Gastrocnemius medialis (tissue), 4 donors: ENCODE measurements at regions of chr16 and their contacts with region 1.

Region 1: DNA sequence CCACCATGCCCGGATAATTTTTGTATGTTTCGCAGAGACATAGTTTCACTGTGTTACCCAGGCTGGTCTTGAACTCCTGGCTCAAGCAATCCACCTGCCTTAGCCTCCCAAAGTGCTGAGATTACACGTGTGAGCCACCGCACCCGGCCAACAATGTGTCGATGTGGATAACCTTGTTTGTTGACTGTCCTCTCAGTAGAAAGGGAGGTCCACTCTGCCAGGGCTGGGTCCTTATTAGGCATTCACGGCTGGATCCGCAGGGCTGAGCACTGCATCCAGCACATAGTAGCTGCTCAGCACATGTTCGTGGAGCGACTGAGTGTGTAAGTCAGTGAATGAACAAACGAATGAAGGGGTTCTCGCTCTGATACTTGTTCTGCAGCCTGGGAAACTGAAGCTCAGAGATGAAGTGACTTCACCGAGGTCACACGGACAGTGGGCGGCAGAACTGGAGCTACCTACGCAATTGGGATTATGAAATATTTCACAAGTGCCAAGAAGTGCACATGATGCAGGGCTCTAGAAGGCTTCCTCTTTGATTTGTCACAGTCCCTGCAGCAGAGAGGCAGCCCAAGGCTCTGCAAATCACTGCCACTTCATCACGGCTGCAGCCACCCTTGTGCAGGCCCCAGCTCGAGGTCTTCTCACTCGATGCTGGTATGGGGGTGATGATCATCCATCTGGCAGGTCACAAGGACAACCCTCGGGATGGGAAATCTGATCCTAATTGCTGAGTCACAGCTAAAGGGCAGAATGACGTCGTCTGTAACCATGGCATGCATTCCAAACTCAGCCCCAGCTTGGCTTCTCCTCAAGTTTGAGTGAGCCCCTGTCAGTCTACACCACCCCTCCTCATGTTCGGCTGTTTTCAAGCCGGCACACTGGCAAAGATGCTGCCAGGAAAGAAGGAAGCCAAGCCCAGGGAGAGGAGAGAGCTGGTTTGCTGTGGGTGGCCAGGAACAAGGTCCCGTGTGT is 28.0 kb upstream of the SNN start:
- DNase-seq: peak; percentile 90 to 94
- ATAC-seq: peak; percentile 92 to 99
- H3K4me3 ChIP-seq: no peak overlapping the region
- H3K27ac ChIP-seq: peak overlapping the region; percentile 88 to 96 (median 94)
- H3K4me1 ChIP-seq: peaks cover 19 to 23% of the 10 kb centered on the region in 2 donors
- H3K27me3 ChIP-seq: no peaks in the 10 kb centered on the region
- CTCF ChIP-seq: peak in 1 of 5 experiments; percentile 25
- POLR2A ChIP-seq: peak; percentile 73 to 82

Region 2: GRCh38 chr16:11390918-11391495 is 249.2 kb before region 1 on chr16:
- in situ Hi-C with region 1: loop called in 3 of 4 experiments (anchors 5 to 10 kb)
- intact Hi-C with region 1: loop called (anchors 1 kb)
- DNase-seq: no peak
- ATAC-seq: no peak
- H3K4me3 ChIP-seq: no peak overlapping the region
- H3K27ac ChIP-seq: no peak overlapping the region
- H3K4me1 ChIP-seq: peaks cover 4 to 5% of the 10 kb centered on the region in 2 donors
- H3K27me3 ChIP-seq: no peaks in the 10 kb centered on the region
- CTCF ChIP-seq: no peak
- POLR2A ChIP-seq: no peak

Region 3: GRCh38 chr16:11407047-11407982 is 232.9 kb before region 1 on chr16:
- in situ Hi-C with region 1: loop called in 2 of 4 experiments (anchors 5 to 10 kb)
- intact Hi-C with region 1: loop called (anchors 1 kb)
- DNase-seq: peak; percentile 19 to 49
- ATAC-seq: peak; percentile 57 to 65
- H3K4me3 ChIP-seq: no peak overlapping the region
- H3K27ac ChIP-seq: no peak overlapping the region
- H3K4me1 ChIP-seq: no peaks in the 10 kb centered on the region
- H3K27me3 ChIP-seq: no peaks in the 10 kb centered on the region
- CTCF ChIP-seq: peak; percentile 48 to 81 (median 68)
- POLR2A ChIP-seq: no peak

Region 4: GRCh38 chr16:11535471-11535870 is 104.7 kb before region 1 on chr16:
- in situ Hi-C with region 1: loop called (anchors 10 kb)
- intact Hi-C with region 1: loop called (anchors 1 kb)
- DNase-seq: no peak
- ATAC-seq: no peak
- H3K4me3 ChIP-seq: no peak overlapping the region
- H3K27ac ChIP-seq: no peak overlapping the region
- H3K4me1 ChIP-seq: no peaks in the 10 kb centered on the region
- H3K27me3 ChIP-seq: no peaks in the 10 kb centered on the region
- CTCF ChIP-seq: no peak
- POLR2A ChIP-seq: no peak

Region 5: DNA sequence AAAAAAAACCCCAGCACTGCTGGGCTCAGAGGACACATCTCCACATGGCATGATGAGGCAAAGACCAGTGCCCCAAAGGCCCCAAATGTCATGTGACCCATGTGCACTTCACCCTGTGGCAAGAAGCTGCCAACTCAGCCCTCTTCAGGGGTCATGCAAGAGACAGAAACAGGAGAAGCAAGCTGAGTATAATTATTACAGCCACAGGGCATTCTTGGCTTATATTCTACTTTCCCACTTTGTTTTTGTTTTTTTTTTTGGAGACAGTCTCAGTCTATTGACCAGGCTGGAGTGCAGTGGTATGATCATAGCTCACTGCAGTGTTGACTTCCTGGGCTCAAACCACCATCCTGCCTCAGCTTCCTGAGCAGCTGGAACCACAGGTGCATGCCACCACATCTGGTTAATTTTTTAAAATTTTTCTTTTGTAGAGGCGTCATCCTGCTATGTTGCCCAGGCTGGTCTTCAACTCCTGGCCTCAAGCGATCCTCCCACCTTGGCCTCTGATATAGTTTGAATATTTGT is 20.8 kb before region 1 on chr16:
- in situ Hi-C with region 1: no loop called
- intact Hi-C with region 1: no loop called
- DNase-seq: peak in 1 of 2 donors; percentile 48
- ATAC-seq: peak in 1 of 2 donors; percentile 52
- H3K4me3 ChIP-seq: no peak overlapping the region
- H3K27ac ChIP-seq: no peak overlapping the region
- H3K4me1 ChIP-seq: peaks cover 0 to 3% of the 10 kb centered on the region in 2 donors
- H3K27me3 ChIP-seq: no peaks in the 10 kb centered on the region
- CTCF ChIP-seq: no peak
- POLR2A ChIP-seq: no peak

Region 6: DNA sequence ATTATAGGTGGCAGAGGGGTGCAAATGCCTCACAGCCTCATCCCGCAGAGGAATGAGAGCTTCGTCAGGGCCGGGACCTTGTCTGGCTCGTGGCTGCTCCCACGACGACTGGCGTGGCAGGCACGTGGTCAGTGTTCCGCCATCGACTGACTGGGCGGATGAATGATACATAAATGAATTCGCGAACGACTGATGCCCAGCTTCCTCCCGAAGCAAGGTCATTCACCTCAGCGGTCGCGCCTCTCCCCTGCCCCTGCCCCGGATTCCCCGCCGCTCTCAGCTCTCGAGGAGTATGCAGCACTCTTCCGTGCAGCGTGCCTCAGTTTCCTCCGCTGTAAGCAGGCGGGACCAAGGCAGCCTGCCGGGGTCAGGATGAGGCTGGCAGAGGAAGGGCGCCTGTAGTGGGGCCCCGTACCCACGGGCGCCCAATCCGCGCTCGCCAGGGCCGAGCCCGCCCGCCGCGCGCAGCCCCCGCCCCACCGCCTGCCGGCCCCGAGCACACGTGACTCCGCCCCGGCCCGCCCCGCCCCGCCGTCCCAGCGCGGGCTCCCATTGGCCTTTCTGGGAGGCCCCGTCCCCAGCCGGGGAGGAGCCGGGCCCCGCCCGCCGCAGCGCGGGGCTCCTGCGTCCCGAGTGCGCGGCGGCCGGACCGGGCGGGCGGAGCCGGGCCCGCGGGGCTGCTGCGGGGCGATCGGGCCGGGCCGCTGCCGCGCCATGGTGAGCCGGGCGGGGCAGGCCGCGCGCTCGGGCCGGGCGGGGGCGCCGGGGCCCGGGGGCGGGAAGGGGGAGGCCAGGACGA is 27.8 kb after region 1 on chr16 and contains the start of gene SNN:
- in situ Hi-C with region 1: no loop called
- intact Hi-C with region 1: loop called (anchors 2 kb)
- DNase-seq: peak; percentile 78 to 88
- ATAC-seq: peak; percentile 57 to 60
- H3K4me3 ChIP-seq: peak within 1 kb of the TSS; percentile 79 to 99 (median 88)
- H3K27ac ChIP-seq: peak within 1 kb of the TSS; percentile 91 to 99 (median 97)
- H3K4me1 ChIP-seq: peaks cover 36 to 41% of the 10 kb centered on the region in 2 donors
- H3K27me3 ChIP-seq: no peaks in the 10 kb centered on the region
- CTCF ChIP-seq: no peak
- POLR2A ChIP-seq: peak; percentile 67 to 73
- total RNA-seq, gene SNN: 22.5 to 94.5 (median 78.1) TPM

Region 7: DNA sequence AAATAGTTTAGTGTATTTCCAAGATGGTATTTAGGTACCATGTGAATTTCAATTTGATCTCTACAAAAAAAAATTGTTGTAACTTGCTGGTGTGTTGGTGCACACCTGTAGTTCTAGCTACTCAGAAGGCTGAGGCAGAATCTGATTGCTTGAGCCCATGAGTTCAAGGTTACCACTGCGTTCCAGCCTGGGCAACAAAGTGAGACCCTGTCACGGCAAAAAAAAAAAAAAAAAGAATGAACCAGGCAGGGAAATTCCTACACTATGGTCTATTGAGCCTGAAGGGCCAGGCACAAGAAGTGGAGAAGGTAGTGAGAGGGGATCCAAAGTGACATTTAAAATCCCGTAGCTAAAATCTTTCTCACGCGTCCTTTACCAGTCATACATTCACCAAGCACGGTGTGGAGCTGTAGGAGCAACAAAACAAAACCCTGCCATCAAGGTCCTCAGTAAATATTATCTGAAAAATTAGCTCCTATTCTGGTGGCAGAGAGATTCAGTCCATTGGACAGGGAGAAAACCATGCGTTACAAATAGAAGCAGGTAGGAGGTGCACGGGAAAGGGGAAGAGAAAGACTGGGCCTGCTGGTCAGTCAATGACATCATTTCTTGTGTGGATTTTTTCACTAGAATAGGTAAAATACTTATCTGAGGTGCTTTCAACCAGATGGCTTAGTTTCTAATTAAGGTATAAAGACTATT is 75.2 kb after region 1 on chr16:
- in situ Hi-C with region 1: no loop called
- intact Hi-C with region 1: loop called (anchors 2 kb)
- DNase-seq: no peak
- ATAC-seq: no peak
- H3K4me3 ChIP-seq: no peak overlapping the region
- H3K27ac ChIP-seq: peak overlapping the region; percentile 78 to 95 (median 88)
- H3K4me1 ChIP-seq: peaks cover 12 to 37% of the 10 kb centered on the region in 2 donors
- H3K27me3 ChIP-seq: no peaks in the 10 kb centered on the region
- CTCF ChIP-seq: no peak
- POLR2A ChIP-seq: no peak

Region 8: GRCh38 chr16:11727796-11728543 is 87.8 kb after region 1 on chr16:
- in situ Hi-C with region 1: no loop called
- intact Hi-C with region 1: no loop called
- DNase-seq: no peak
- ATAC-seq: peak in 1 of 2 donors; percentile 87
- H3K4me3 ChIP-seq: no peak overlapping the region
- H3K27ac ChIP-seq: peak overlapping the region; percentile 11 to 95 (median 62)
- H3K4me1 ChIP-seq: peaks cover 0 to 9% of the 10 kb centered on the region in 2 donors
- H3K27me3 ChIP-seq: no peaks in the 10 kb centered on the region
- CTCF ChIP-seq: no peak
- POLR2A ChIP-seq: no peak